Kidney (tissue), 22 donors: ENCODE measurements at regions of chr15 and their contacts with region 1.

Region 1: GRCh38 chr15:32659340-32660155 is 18.0 kb downstream of the SCG5 start:
- DNase-seq: peak in 1 of 5 donors; percentile 42
- H3K4me3 ChIP-seq: no peak overlapping the region
- H3K27ac ChIP-seq: no peak overlapping the region
- H3K4me1 ChIP-seq: peaks cover 0 to 2% (median 0%) of the 10 kb centered on the region in 3 donors
- H3K27me3 ChIP-seq: no peaks in the 10 kb centered on the region
- CTCF ChIP-seq: no peak

Region 2: DNA sequence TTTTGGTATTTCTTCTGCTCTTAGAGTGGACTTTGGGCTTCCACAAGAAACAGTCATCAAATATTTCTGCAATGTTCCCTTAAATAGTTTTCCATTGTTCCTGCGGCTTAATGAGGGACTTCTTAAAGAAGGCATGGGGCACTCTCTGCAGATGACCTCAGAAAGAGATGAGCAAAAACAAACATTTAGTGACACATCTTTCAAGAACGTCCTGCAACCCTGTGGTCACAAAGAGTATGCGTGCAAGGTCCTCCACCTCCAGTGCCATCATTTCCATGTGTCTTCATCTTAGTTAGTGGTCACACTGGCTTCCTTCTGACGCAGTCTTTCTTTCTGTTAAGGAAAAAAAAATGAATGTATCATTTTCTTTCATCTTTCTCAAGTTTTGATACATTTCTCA is 114.5 kb after region 1 on chr15:
- intact Hi-C with region 1: no loop called
- DNase-seq: no peak
- H3K4me3 ChIP-seq: no peak overlapping the region
- H3K27ac ChIP-seq: no peak overlapping the region
- H3K4me1 ChIP-seq: no peaks in the 10 kb centered on the region
- H3K27me3 ChIP-seq: no peaks in the 10 kb centered on the region
- CTCF ChIP-seq: no peak

Region 3: DNA sequence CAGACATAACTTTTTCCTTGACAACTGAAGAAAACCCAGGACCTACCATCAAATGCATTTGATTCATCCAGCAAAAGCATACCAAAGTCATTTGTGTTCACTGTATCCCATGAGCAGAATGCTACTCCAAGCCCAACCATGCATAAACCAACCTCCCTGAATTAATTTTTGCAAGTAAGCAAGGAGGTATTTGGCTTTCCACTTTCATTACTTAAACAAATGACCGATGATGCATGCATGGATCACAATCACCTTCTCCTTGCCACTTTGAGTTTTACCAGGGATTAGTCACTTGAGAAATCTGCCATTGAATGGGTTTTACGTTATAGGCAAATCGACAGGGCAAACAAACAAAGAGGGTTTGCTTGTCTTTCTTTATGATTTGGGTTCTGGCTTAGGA is 320.2 kb after region 1 on chr15:
- intact Hi-C with region 1: loop called (anchors 10 kb)
- DNase-seq: peak in 2 of 5 donors; percentile 40 to 49
- H3K4me3 ChIP-seq: no peak overlapping the region
- H3K27ac ChIP-seq: no peak overlapping the region
- H3K4me1 ChIP-seq: no peaks in the 10 kb centered on the region
- H3K27me3 ChIP-seq: no peaks in the 10 kb centered on the region
- CTCF ChIP-seq: no peak